CD8-positive, alpha-beta T cell (primary cell): ENCODE measurements at regions of chr13 and their contacts with region 1.

Region 1: GRCh38 chr13:40069173-40070044 is 413.9 kb downstream of the COG6 start:
- DNase-seq: peak; percentile 47 to 86 (median 77)
- ATAC-seq: peak; percentile 96
- H3K4me3 ChIP-seq: no peak overlapping the region
- H3K4me3 Mint-ChIP-seq: peak overlapping the region; percentile 59
- H3K27ac ChIP-seq: no peak overlapping the region
- H3K27ac Mint-ChIP-seq: peak overlapping the region; percentile 53
- H3K4me1 ChIP-seq: peaks cover 20% of the 10 kb centered on the region
- H3K4me1 Mint-ChIP-seq: peaks cover 29% of the 10 kb centered on the region
- H3K27me3 ChIP-seq: no peaks in the 10 kb centered on the region
- H3K27me3 Mint-ChIP-seq: no peaks in the 10 kb centered on the region
- CTCF ChIP-seq: peak; percentile 90

Region 2: GRCh38 chr13:38670627-38671026 is 1398.8 kb before region 1 on chr13:
- CTCF ChIA-PET with region 1: no interaction called
- POLR2A ChIA-PET with region 1: no interaction called
- intact Hi-C with region 1: no loop called
- DNase-seq: no peak
- ATAC-seq: no peak
- H3K4me3 ChIP-seq: no peak overlapping the region
- H3K4me3 Mint-ChIP-seq: no peak overlapping the region
- H3K27ac ChIP-seq: no peak overlapping the region
- H3K27ac Mint-ChIP-seq: no peak overlapping the region
- H3K4me1 ChIP-seq: no peaks in the 10 kb centered on the region
- H3K4me1 Mint-ChIP-seq: no peaks in the 10 kb centered on the region
- H3K27me3 ChIP-seq: no peaks in the 10 kb centered on the region
- H3K27me3 Mint-ChIP-seq: peaks cover 2% of the 10 kb centered on the region
- CTCF ChIP-seq: no peak

Region 3: GRCh38 chr13:39942552-39943273 is 126.7 kb before region 1 on chr13:
- CTCF ChIA-PET with region 1: interaction called, 5 read pairs
- POLR2A ChIA-PET with region 1: no interaction called
- intact Hi-C with region 1: loop called in 1 of 2 experiments (anchors 2 kb)
- DNase-seq: peak; percentile 40 to 81 (median 72)
- ATAC-seq: peak; percentile 99
- H3K4me3 ChIP-seq: no peak overlapping the region
- H3K4me3 Mint-ChIP-seq: no peak overlapping the region
- H3K27ac ChIP-seq: no peak overlapping the region
- H3K27ac Mint-ChIP-seq: no peak overlapping the region
- H3K4me1 ChIP-seq: no peaks in the 10 kb centered on the region
- H3K4me1 Mint-ChIP-seq: peaks cover 4% of the 10 kb centered on the region
- H3K27me3 ChIP-seq: peaks cover 0 to 2% of the 10 kb centered on the region in 2 experiments
- H3K27me3 Mint-ChIP-seq: peaks cover 2% of the 10 kb centered on the region
- CTCF ChIP-seq: peak; percentile 96

Region 4: DNA sequence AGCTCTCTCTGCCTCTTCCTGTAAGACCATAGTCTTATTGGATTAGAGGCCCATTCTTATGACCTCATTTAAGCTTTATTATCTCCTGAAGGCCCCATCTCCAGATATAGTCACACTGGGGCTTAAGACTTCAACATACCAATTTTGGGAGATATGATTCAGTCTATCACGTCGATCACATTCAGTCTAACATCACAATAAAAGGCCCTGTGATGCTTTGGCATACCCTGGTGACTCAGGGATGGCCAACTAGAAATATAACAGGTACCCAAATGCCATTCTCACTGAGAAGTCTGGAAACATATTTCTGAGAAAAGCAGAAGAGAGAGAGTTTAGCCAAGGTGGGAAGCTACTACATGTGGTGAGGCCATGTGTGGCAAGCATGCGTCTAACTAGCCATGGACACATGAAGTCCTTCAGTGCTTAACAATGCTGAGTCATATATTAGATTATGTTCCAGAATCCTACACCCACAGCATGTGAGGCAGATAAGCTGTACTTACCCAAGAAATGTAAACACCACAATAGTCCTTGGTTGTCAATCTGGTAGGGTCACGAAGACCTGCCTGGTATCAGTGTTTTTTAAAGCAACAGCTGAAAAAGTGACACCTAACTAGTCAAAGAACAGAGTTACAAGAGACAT is 111.9 kb after region 1 on chr13:
- CTCF ChIA-PET with region 1: interaction called, 21 read pairs
- POLR2A ChIA-PET with region 1: interaction called, 3 read pairs
- intact Hi-C with region 1: loop called in 1 of 2 experiments (anchors 1 kb)
- DNase-seq: no peak
- ATAC-seq: no peak
- H3K4me3 ChIP-seq: no peak overlapping the region
- H3K4me3 Mint-ChIP-seq: no peak overlapping the region
- H3K27ac ChIP-seq: no peak overlapping the region
- H3K27ac Mint-ChIP-seq: no peak overlapping the region
- H3K4me1 ChIP-seq: peaks cover 43% of the 10 kb centered on the region
- H3K4me1 Mint-ChIP-seq: peaks cover 67% of the 10 kb centered on the region
- H3K27me3 ChIP-seq: no peaks in the 10 kb centered on the region
- H3K27me3 Mint-ChIP-seq: no peaks in the 10 kb centered on the region
- CTCF ChIP-seq: no peak

Region 5: DNA sequence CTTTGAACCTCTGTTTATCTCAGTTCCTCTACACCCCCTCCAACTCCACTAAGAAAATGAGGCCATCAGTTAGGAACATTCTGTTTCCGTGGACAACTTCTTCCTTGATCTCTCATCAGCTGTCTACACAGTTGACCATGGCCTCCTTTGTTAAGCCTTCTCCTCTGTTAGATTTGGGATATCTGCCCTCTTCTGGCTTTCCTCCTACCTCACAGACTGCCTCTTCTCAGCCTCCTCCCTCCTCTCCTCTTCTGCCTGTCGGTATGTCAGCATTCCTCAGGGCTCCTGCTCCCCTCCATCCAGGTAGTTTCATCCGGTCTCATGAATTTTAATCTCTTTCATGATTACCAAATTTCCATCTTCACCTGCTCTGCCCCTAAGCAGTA is 142.2 kb after region 1 on chr13:
- CTCF ChIA-PET with region 1: interaction called, 10 read pairs
- POLR2A ChIA-PET with region 1: interaction called, 3 read pairs
- intact Hi-C with region 1: no loop called
- DNase-seq: no peak
- ATAC-seq: no peak
- H3K4me3 ChIP-seq: no peak overlapping the region
- H3K4me3 Mint-ChIP-seq: no peak overlapping the region
- H3K27ac ChIP-seq: no peak overlapping the region
- H3K27ac Mint-ChIP-seq: no peak overlapping the region
- H3K4me1 ChIP-seq: peaks cover 31% of the 10 kb centered on the region
- H3K4me1 Mint-ChIP-seq: peaks cover 60% of the 10 kb centered on the region
- H3K27me3 ChIP-seq: no peaks in the 10 kb centered on the region
- H3K27me3 Mint-ChIP-seq: no peaks in the 10 kb centered on the region
- CTCF ChIP-seq: no peak

Region 6: GRCh38 chr13:40440990-40441820 is 371.8 kb after region 1 on chr13:
- CTCF ChIA-PET with region 1: interaction called, 4 read pairs
- POLR2A ChIA-PET with region 1: no interaction called
- intact Hi-C with region 1: loop called in 1 of 2 experiments (anchors 5 kb)
- DNase-seq: no peak
- ATAC-seq: no peak
- H3K4me3 ChIP-seq: no peak overlapping the region
- H3K4me3 Mint-ChIP-seq: no peak overlapping the region
- H3K27ac ChIP-seq: no peak overlapping the region
- H3K27ac Mint-ChIP-seq: no peak overlapping the region
- H3K4me1 ChIP-seq: peaks cover 23% of the 10 kb centered on the region
- H3K4me1 Mint-ChIP-seq: peaks cover 30% of the 10 kb centered on the region
- H3K27me3 ChIP-seq: no peaks in the 10 kb centered on the region
- H3K27me3 Mint-ChIP-seq: no peaks in the 10 kb centered on the region
- CTCF ChIP-seq: no peak

Region 7: GRCh38 chr13:40671956-40672764 is 602.8 kb after region 1 on chr13:
- CTCF ChIA-PET with region 1: interaction called, 19 read pairs
- POLR2A ChIA-PET with region 1: no interaction called
- intact Hi-C with region 1: loop called in 1 of 2 experiments (anchors 5 kb)
- DNase-seq: no peak
- ATAC-seq: no peak
- H3K4me3 ChIP-seq: no peak overlapping the region
- H3K4me3 Mint-ChIP-seq: no peak overlapping the region
- H3K27ac ChIP-seq: no peak overlapping the region
- H3K27ac Mint-ChIP-seq: no peak overlapping the region
- H3K4me1 ChIP-seq: peaks cover 13% of the 10 kb centered on the region
- H3K4me1 Mint-ChIP-seq: peaks cover 22% of the 10 kb centered on the region
- H3K27me3 ChIP-seq: no peaks in the 10 kb centered on the region
- H3K27me3 Mint-ChIP-seq: no peaks in the 10 kb centered on the region
- CTCF ChIP-seq: no peak